ENCODE measurements at regions of chr2 and their contacts with region 1.

Region 1: DNA sequence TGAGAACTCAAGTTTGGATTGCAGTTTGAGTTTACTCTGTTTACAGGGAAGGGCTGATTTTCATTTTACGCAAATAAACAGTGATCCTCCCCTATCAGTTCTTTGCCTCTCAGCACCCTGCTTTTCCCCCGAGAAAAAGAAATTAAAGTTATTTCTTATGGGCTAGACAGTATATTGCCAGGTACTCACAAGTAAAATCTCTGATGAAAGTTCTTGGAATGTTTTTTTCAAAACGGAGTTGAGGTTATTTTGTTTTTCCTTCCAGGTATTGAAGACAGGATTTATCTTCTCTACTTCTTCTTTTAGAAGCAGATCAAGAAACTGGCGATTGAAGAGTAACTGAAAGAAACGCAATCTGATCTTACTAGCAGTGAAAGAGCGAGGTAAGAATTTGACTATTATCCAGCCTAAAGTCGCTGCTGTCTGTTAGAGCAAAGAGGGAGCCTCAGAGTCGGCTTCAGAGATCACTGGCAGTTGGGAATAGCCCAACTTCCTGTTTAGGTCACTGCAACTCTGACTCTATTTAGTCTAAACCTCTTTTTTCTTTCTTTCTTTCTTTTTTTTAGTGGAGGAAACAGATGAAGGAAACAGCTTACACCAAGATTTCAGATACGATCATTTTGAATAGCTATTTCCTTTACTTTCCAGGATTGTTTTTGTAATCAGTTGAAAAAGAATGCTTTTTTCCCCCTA is at the start of gene TFPI:
- DNase-seq: no peak
- ATAC-seq: no peak
- H3K4me3 Mint-ChIP-seq: peak within 1 kb of the TSS; percentile 24
- H3K27ac Mint-ChIP-seq: no peak within 1 kb of the TSS
- H3K4me1 Mint-ChIP-seq: peaks cover 7% of the 10 kb centered on the region
- H3K27me3 Mint-ChIP-seq: peaks cover 10% of the 10 kb centered on the region
- total RNA-seq, gene TFPI: not detected

Region 2: GRCh38 chr2:187581125-187581896 is 27.2 kb after region 1 on chr2:
- CTCF ChIA-PET with region 1: interaction called, 10 read pairs
- POLR2A ChIA-PET with region 1: no interaction called
- DNase-seq: peak; percentile 52
- ATAC-seq: no peak
- H3K4me3 Mint-ChIP-seq: no peak overlapping the region
- H3K27ac Mint-ChIP-seq: no peak overlapping the region
- H3K4me1 Mint-ChIP-seq: peaks cover 9% of the 10 kb centered on the region
- H3K27me3 Mint-ChIP-seq: peaks cover 3% of the 10 kb centered on the region

Measured in activated CD8-positive, alpha-beta T cell treated with anti-CD3 and anti-CD28 coated beads, Interleukin-2, amount 10 ng/mL, durations not matched to agents 7 days and 5 days (primary cell).